HepG2 (cell line): ENCODE measurements at regions of chr20 and their contacts with region 1.

Region 1: DNA sequence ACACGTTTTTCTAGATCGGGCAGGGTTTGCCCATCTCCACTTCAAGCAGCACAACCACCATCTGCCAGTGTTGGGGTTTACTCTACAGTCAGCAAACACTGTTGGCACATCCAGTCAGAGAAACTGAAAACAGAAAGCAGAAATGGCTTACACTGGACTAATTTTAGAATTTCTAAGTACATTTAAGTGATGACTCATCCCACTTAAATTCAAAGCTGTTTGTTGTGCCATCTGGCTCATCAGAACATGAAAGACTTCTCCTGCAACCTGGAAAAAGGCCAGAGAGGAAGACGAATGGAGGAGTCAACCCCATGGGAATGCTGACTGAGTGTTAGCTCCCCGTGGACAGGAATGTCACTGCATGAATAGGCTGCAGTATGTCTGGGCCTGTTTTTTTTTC is 21.8 kb downstream of the FAM209B start:
- DNase-seq: peak; percentile 92
- ATAC-seq: peak; percentile 76
- H3K4me3 ChIP-seq: no peak overlapping the region
- H3K27ac ChIP-seq: no peak overlapping the region
- H3K4me1 ChIP-seq: peaks cover 19% of the 10 kb centered on the region
- H3K27me3 ChIP-seq: peaks cover 3 to 19% of the 10 kb centered on the region in 2 experiments; a peak in 3 of 5 replicates
- CTCF ChIP-seq: no peak
- EP300 ChIP-seq: no peak
- POLR2A ChIP-seq: no peak
- RAD21 ChIP-seq: no peak

Region 2: GRCh38 chr20:54668271-54669039 is 1886.4 kb before region 1 on chr20:
- CTCF ChIA-PET with region 1: no interaction called
- POLR2A ChIA-PET with region 1: no interaction called
- in situ Hi-C with region 1: loop called (anchors 25 kb)
- intact Hi-C with region 1: no loop called
- DNase-seq: peak; percentile 41
- ATAC-seq: peak; percentile 99
- H3K4me3 ChIP-seq: no peak overlapping the region
- H3K27ac ChIP-seq: no peak overlapping the region
- H3K4me1 ChIP-seq: peaks cover 5% of the 10 kb centered on the region; the same call in 1 of the 2 replicates
- H3K27me3 ChIP-seq: no peaks in the 10 kb centered on the region
- CTCF ChIP-seq: peak; percentile 79
- EP300 ChIP-seq: no peak
- POLR2A ChIP-seq: no peak
- RAD21 ChIP-seq: no peak; the same call in 1 of the 2 replicates

Region 3: GRCh38 chr20:56540420-56540819 is 14.4 kb before region 1 on chr20:
- CTCF ChIA-PET with region 1: no interaction called
- POLR2A ChIA-PET with region 1: no interaction called
- in situ Hi-C with region 1: no loop called
- intact Hi-C with region 1: no loop called
- DNase-seq: no peak
- ATAC-seq: no peak
- H3K4me3 ChIP-seq: no peak overlapping the region
- H3K27ac ChIP-seq: no peak overlapping the region
- H3K4me1 ChIP-seq: no peaks in the 10 kb centered on the region
- H3K27me3 ChIP-seq: no peaks in the 10 kb centered on the region; a peak in 1 of 5 replicates
- CTCF ChIP-seq: no peak
- EP300 ChIP-seq: no peak
- POLR2A ChIP-seq: no peak
- RAD21 ChIP-seq: no peak

Region 4: DNA sequence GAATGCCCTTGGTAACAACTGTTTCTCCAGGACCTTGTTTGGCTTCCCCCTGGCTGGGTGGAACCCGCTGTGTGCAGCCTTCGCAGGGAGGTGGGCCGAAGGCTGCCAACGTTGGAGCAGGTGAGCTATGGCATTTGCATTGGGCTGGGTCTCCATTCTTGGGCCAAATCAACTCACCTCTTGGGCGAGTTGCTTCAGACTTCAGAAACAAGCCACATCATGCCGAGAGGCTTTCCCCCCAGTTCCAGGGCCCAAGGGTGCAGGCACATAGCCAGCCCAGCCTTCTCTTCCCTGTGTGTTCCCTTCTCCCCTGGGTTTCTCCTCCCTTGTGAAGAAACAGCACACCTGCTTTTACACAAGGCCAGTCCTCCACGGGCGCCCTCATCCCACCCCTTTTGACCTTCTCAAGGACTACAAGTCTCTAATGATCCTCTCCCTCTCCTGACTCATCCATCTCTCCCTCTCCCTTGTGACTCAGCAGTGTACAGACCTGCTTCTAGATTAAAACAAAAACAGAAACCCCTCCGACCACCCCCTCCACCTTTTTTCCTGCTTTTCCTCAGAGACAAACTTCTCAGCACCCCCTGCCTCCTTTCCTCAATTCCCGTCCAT is 19.8 kb after region 1 on chr20:
- CTCF ChIA-PET with region 1: interaction called, 32 read pairs
- POLR2A ChIA-PET with region 1: no interaction called
- in situ Hi-C with region 1: no loop called
- intact Hi-C with region 1: loop called (anchors 1 kb)
- DNase-seq: no peak
- ATAC-seq: peak; percentile 7; the same call in 2 of the 3 replicates
- H3K4me3 ChIP-seq: no peak overlapping the region
- H3K27ac ChIP-seq: no peak overlapping the region
- H3K4me1 ChIP-seq: no peaks in the 10 kb centered on the region
- H3K27me3 ChIP-seq: peaks cover 0 to 28% of the 10 kb centered on the region in 2 experiments; a peak in 3 of 5 replicates
- CTCF ChIP-seq: no peak
- EP300 ChIP-seq: no peak
- POLR2A ChIP-seq: no peak
- RAD21 ChIP-seq: no peak

Region 5: GRCh38 chr20:56974499-56975236 is 419.8 kb after region 1 on chr20:
- CTCF ChIA-PET with region 1: interaction called, 4 read pairs
- POLR2A ChIA-PET with region 1: no interaction called
- in situ Hi-C with region 1: no loop called
- intact Hi-C with region 1: loop called (anchors 1 kb)
- DNase-seq: peak; percentile 48
- ATAC-seq: peak; percentile 73
- H3K4me3 ChIP-seq: no peak overlapping the region
- H3K27ac ChIP-seq: no peak overlapping the region
- H3K4me1 ChIP-seq: no peaks in the 10 kb centered on the region
- H3K27me3 ChIP-seq: peaks cover 2 to 42% of the 10 kb centered on the region in 2 experiments; a peak in 3 of 5 replicates
- CTCF ChIP-seq: peak; percentile 82
- EP300 ChIP-seq: no peak
- POLR2A ChIP-seq: no peak
- RAD21 ChIP-seq: peak; percentile 60; the same call in 1 of the 2 replicates

Region 6: DNA sequence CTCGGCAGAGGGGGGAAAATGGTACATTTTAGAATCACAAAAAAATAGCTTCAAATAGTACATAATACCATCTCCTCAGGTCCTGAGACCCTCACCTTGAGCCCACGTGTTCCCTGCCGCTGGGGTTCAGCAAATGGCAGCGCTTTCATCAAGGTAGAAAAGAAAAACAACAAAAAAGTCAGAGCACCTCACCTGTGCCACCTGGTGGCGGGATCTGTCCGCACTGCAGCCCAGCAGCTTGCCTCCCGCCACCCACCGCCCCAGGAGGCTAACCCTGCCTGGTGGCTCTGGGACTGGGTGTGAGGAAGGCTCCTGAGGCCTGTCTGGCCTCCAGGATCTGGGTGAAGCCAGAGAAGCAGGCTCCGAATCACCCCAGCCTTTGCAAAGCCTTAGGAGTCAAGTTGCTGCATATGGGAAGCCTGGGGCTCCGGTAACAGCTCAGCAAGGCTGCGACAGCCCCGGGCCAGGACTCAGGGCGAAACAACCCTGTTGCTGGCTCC is 440.8 kb after region 1 on chr20:
- CTCF ChIA-PET with region 1: interaction called, 17 read pairs
- POLR2A ChIA-PET with region 1: no interaction called
- in situ Hi-C with region 1: loop called (anchors 5 kb)
- intact Hi-C with region 1: loop called (anchors 1 kb)
- DNase-seq: peak; percentile 23
- ATAC-seq: peak; percentile 89
- H3K4me3 ChIP-seq: no peak overlapping the region
- H3K27ac ChIP-seq: no peak overlapping the region
- H3K4me1 ChIP-seq: no peaks in the 10 kb centered on the region
- H3K27me3 ChIP-seq: no peaks in the 10 kb centered on the region; a peak in 1 of 5 replicates
- CTCF ChIP-seq: peak; percentile 81
- EP300 ChIP-seq: no peak
- POLR2A ChIP-seq: no peak
- RAD21 ChIP-seq: peak; percentile 70

Region 7: DNA sequence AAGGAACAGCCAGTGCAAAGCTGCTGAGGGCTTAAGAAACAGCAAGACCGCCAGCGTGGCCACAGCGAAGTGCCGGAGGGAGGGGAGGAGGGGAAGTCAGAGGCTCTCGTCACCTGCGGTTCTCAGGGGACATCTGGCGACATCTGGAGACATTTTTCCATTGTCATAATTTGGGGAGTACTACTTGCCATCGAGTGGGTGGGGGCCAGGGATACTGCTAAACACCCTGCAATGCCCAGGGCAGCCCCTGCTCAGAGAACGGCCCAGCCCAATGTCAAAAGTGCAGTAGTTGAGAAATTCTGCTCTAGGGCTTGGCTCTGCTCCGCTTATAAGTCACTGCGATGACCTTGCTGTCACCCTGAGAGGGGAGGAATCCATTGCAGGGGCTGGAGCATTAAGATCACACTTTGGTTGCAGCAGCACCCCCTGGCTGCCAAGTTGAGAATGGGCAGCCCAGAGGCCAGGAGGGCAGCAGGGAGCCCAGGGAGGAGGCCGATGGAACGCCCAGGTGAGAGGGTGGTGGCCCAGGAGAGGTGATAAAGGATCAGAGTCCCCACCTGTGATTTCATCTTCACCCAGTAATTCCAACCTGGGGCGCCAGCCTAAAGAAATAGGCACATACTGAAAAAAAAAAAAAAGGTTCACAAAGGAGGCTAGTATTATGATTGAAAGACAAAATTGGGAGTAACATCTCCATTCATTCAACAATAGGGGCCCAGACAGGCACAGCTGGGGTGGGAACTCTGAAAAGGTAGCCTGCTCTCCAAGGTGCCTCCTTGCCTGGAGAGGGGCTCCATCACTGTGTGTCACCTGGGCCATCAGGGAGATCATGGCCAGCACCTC is 493.4 kb after region 1 on chr20:
- CTCF ChIA-PET with region 1: no interaction called
- POLR2A ChIA-PET with region 1: no interaction called
- in situ Hi-C with region 1: no loop called
- intact Hi-C with region 1: loop called (anchors 5 kb)
- DNase-seq: peak; percentile 35
- ATAC-seq: peak; percentile 70
- H3K4me3 ChIP-seq: no peak overlapping the region
- H3K27ac ChIP-seq: no peak overlapping the region
- H3K4me1 ChIP-seq: peaks cover 31% of the 10 kb centered on the region
- H3K27me3 ChIP-seq: 0 out of 5 replicates have a peak, but pooled peaks cover 0 to 5% of the 10 kb centered on the region in 2 experiments
- CTCF ChIP-seq: peak; percentile 79
- EP300 ChIP-seq: no peak
- POLR2A ChIP-seq: no peak
- RAD21 ChIP-seq: no peak

Region 8: DNA sequence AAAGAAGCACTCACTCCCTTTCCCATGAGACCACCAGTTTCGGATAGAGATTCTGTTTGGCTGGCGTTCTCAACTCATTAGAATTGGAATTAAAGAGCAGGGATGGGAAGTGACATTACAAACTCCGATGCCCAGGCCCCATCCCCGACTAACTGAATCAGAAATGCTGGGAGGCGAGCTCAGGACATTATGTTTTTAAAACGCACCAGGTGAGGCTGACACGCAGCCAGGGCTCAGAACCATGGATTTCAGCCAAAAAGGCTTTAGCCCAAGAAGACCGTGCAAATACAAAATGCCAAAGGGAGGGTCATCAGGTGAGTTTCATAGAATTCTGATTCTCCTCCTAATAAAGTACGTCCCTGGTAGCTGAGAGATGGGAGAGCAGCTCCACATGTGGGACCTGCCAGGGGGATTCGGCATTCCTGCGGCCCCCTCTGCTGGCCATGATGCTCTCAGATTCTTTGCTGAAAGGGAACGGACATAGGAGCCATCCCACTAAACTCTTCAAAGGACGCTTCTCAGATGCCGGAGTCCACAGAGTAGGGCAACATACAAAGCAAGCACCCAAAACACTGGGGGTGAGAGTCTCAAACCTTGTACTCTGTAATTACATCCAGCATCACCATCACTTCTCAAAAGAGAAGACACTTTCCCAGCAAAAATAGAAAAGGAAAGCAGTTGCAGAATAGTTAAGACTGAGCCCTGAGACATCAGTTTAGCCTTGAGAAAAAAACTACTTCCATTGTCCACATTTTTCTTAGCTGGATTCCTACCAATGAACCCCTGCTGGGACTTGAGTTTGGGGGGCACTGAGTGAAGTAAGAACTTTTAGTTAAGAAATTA is 506.4 kb after region 1 on chr20:
- CTCF ChIA-PET with region 1: no interaction called
- POLR2A ChIA-PET with region 1: no interaction called
- in situ Hi-C with region 1: no loop called
- intact Hi-C with region 1: loop called (anchors 5 kb)
- DNase-seq: no peak
- ATAC-seq: peak; percentile 85
- H3K4me3 ChIP-seq: no peak overlapping the region
- H3K27ac ChIP-seq: no peak overlapping the region
- H3K4me1 ChIP-seq: no peaks in the 10 kb centered on the region
- H3K27me3 ChIP-seq: peaks cover 2 to 30% of the 10 kb centered on the region in 2 experiments
- CTCF ChIP-seq: peak; percentile 70
- EP300 ChIP-seq: no peak
- POLR2A ChIP-seq: no peak
- RAD21 ChIP-seq: no peak